Calu3 (cell line): ENCODE measurements at regions of chr9 and their contacts with region 1.

Region 1: DNA sequence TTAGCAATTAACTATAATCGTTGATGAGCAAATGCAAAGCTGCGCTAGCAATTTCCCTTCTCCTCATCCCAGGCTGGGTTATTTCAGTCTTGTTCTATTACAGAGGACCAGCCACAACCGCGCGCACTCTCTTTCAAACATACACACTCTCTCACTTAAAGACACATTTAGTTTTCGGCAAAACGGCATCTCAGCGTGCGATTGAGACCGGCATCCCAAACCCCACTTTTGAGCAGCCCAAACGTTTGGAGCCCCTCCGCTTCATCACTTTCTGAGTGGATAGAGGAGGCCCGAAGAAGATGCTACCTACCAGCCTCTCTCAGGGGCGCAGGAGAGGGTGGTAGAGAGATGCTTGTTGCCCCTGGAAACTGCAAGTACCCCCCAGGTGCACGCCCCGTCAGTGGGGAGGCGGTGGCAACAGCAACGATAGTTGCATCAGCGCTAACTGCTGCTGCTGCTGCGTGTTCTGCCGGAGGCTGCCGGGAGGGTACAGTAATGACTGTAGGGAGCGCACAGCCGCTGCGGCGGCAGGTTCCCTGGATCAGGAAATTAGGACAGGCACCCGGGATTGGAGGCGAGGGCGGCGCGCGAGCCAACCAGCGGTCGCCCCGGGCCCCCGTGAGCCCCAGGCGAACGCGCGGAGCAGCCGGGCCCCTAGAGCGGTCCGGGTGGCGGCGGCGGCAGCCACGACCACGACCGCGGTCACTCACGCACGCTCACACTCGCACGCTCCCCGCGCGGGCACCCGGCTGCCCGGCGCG is 488 bp upstream of the VLDLR start:
- DNase-seq: peak; percentile 81
- H3K4me3 Mint-ChIP-seq: peak overlapping the region; percentile 88
- H3K27ac Mint-ChIP-seq: peak overlapping the region; percentile 93
- H3K4me1 Mint-ChIP-seq: peaks cover 24% of the 10 kb centered on the region
- H3K27me3 Mint-ChIP-seq: no peaks in the 10 kb centered on the region
- CTCF ChIP-seq: no peak

Region 2: GRCh38 chr9:2241836-2242741 is 379.0 kb before region 1 on chr9:
- CTCF ChIA-PET with region 1: no interaction called
- intact Hi-C with region 1: loop called (anchors 10 kb)
- DNase-seq: peak; percentile 78
- H3K4me3 Mint-ChIP-seq: peak overlapping the region; percentile 77
- H3K27ac Mint-ChIP-seq: peak overlapping the region; percentile 83
- H3K4me1 Mint-ChIP-seq: peaks cover 36% of the 10 kb centered on the region
- H3K27me3 Mint-ChIP-seq: no peaks in the 10 kb centered on the region
- CTCF ChIP-seq: no peak

Region 3: DNA sequence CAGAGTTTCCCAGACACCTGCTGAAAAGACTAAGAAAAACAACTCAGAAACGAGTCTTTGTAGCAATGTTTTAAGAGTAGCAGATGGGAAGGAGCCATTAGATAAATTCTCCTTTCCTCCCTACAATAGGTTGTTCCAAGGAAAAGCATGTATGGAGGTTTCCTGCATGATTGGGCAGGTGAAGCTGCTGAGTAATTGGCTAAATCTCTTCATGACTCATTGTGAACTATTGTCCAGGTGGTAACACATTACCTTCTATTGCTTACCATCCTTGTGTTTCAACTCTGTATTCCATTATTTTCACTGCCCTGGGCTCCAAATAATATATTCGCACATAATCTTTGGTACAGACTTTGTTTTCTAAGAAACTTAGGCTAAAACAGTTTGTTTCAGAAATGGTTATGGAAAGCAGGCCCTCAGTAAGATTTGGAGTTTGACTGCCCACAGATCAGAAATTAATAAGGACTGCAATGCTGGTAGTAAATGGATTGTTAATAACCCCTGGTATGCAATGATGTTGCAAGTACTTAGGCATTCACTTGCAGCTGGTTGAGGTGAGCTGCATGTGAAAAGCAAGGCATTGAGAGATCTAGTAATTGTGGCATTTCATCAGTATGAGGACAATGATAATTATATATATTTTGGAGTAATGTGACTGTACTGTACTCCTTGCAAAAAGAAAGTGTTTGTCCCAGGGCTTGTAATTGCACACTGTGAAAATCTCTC is 280.9 kb before region 1 on chr9:
- CTCF ChIA-PET with region 1: no interaction called
- intact Hi-C with region 1: loop called (anchors 10 kb)
- DNase-seq: no peak
- H3K4me3 Mint-ChIP-seq: no peak overlapping the region
- H3K27ac Mint-ChIP-seq: no peak overlapping the region
- H3K4me1 Mint-ChIP-seq: no peaks in the 10 kb centered on the region
- H3K27me3 Mint-ChIP-seq: no peaks in the 10 kb centered on the region
- CTCF ChIP-seq: no peak

Region 4: DNA sequence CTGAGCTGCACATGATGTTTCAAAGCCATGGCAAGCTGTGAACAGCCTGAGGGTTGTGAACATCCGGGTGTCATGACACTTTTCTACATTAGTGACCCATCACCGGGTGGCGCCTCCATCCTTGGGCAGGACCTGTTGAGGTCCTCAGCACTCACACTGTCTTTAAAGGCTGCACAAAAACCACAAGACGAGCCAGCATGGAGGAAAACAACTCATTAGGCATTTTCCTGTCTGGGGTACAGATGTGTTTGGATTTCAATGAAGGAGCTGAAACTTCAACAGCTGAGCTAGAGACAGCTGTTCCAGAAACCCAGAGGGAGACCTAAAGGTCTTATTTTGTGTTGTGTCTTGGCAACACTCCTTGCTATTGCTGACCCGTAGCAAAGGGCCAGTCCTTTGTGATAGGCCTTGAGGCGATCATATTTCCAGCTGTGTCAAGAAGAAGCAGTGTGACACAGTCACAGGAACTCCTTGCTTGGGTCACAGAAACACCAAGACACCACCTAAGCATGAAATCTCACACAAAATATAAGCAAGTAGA is 151.3 kb before region 1 on chr9:
- CTCF ChIA-PET with region 1: no interaction called
- intact Hi-C with region 1: loop called (anchors 5 kb)
- DNase-seq: peak; percentile 35
- H3K4me3 Mint-ChIP-seq: no peak overlapping the region
- H3K27ac Mint-ChIP-seq: no peak overlapping the region
- H3K4me1 Mint-ChIP-seq: peaks cover 26% of the 10 kb centered on the region
- H3K27me3 Mint-ChIP-seq: no peaks in the 10 kb centered on the region
- CTCF ChIP-seq: no peak

Region 5: DNA sequence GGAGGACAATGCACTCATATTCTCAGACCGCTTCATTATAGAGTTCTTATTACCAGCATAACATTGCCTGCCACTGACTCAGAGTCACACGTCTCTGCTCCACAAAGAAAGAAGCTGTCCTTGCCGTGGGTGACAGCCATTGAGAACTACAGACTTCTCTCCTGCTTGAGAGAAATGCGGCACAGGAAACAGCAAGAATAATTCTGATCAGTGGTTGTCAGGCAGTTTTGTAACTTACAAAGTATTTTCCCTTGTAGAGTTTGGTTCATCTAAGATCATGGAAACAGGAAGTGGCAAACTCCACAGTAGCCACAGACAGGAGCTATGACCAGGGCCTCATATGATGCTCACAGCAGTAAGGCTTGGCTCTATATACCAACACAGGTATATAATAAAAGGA is 143.3 kb after region 1 on chr9:
- CTCF ChIA-PET with region 1: no interaction called
- intact Hi-C with region 1: no loop called
- DNase-seq: no peak
- H3K4me3 Mint-ChIP-seq: no peak overlapping the region
- H3K27ac Mint-ChIP-seq: no peak overlapping the region
- H3K4me1 Mint-ChIP-seq: peaks cover 10% of the 10 kb centered on the region
- H3K27me3 Mint-ChIP-seq: no peaks in the 10 kb centered on the region
- CTCF ChIP-seq: no peak